Testis (tissue), 5 donors: ENCODE measurements at regions of chr2 and their contacts with region 1.

Region 1: GRCh38 chr2:218406209-218406948 is 6.7 kb downstream of the CTDSP1 start:
- DNase-seq: peak; percentile 96
- H3K4me3 ChIP-seq: peak overlapping the region; percentile 54 to 55
- H3K27ac ChIP-seq: peak overlapping the region; percentile 66 to 90
- H3K4me1 ChIP-seq: peaks cover 33% of the 10 kb centered on the region
- H3K27me3 ChIP-seq: no peaks in the 10 kb centered on the region
- CTCF ChIP-seq: peak; percentile 66 to 70 (median 68)
- POLR2A ChIP-seq: no peak

Region 2: DNA sequence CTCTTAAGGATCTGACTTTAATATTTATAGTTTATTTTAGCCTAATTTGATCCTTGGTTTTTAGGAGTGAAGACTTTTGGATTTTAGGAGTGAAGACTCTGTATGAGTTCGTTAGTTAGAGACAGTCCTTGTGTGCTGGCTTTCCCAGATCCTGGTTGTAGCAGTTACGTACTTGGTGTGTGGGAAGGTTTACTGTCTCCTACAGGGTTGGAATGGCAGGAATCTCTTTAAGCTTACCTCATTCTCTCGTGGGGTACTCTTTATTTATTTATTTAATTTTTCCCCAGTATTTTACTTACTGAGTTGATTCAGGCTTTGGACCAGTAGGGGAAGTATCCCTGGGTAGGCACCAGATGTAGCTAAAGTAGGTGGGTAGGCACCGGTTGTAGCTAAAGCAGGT is 282.4 kb before region 1 on chr2:
- intact Hi-C with region 1: no loop called
- DNase-seq: no peak
- H3K4me3 ChIP-seq: no peak overlapping the region
- H3K27ac ChIP-seq: no peak overlapping the region
- H3K4me1 ChIP-seq: no peaks in the 10 kb centered on the region
- H3K27me3 ChIP-seq: no peaks in the 10 kb centered on the region
- CTCF ChIP-seq: no peak
- POLR2A ChIP-seq: no peak

Region 3: GRCh38 chr2:218466016-218466521 is 59.7 kb after region 1 on chr2:
- intact Hi-C with region 1: loop called (anchors 5 kb)
- DNase-seq: no peak
- H3K4me3 ChIP-seq: no peak overlapping the region
- H3K27ac ChIP-seq: no peak overlapping the region
- H3K4me1 ChIP-seq: no peaks in the 10 kb centered on the region
- H3K27me3 ChIP-seq: no peaks in the 10 kb centered on the region
- CTCF ChIP-seq: peak in 2 of 3 experiments; percentile 9 to 44
- POLR2A ChIP-seq: no peak

Region 4: GRCh38 chr2:218557941-218558340 is 151.6 kb after region 1 on chr2:
- intact Hi-C with region 1: loop called (anchors 10 kb)
- DNase-seq: no peak
- H3K4me3 ChIP-seq: no peak overlapping the region
- H3K27ac ChIP-seq: peak overlapping the region in 1 of 2 donors; percentile 44
- H3K4me1 ChIP-seq: no peaks in the 10 kb centered on the region
- H3K27me3 ChIP-seq: no peaks in the 10 kb centered on the region
- CTCF ChIP-seq: no peak
- POLR2A ChIP-seq: no peak